Heart left ventricle (tissue), 16 donors: ENCODE measurements at regions of chr9 and their contacts with region 1.

Region 1: DNA sequence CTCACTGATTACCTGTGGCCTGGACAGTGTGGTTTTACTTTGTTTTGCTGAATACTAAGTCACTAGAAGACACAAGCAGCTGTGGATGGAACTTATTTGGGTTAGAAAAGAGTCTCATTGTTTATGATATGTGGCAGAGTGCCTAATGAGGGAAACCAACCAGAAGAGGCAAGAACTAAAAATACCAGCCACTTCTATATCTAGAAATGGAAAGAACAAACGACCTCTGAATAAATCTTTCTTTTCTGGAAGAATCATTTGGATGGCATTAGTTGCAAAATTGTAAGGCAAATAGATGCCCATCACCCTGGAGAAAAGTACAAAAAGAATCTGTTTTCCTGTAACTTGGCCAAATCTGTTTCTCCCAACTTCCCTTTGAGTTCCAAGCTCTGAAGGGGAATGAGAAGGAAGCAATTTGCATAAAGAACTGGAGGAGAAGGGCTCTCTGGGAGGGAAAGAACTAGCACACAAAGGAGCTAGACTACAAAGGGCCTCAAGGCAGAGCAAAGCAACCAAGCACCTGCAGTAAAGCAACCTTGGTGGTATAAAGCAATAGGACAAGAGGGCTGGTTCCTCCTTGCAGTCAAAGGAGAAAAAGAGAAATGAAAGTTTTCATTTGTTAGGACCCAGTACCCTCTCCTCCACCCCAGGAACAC is 455.4 kb downstream of the CAAP1 start:
- DNase-seq: no peak
- ATAC-seq: no peak
- H3K4me3 ChIP-seq: no peak overlapping the region
- H3K27ac ChIP-seq: no peak overlapping the region
- H3K4me1 ChIP-seq: no peaks in the 10 kb centered on the region
- H3K27me3 ChIP-seq: no peaks in the 10 kb centered on the region
- CTCF ChIP-seq: no peak
- POLR2A ChIP-seq: no peak

Region 2: DNA sequence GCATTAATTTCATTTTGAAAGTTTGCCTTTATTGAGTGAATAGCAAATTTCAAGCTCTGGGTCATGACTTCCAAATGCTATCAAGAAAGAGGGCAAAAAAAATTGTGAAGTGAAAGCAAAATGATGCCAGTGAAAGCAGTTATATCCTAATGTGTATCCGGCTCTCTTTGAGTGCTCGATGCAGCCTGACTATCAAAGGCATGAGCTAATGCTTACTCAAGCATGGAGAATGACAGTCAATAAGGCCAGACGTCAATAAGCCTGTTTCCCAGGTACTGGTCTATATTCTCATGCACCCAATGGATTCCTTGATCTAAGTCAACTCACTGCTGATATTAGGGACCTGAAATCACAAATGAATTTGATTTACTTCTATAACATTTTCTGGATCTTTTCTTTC is 20.0 kb after region 1 on chr9:
- intact Hi-C with region 1: loop called in 1 of 10 experiments (anchors 1 kb)
- DNase-seq: no peak
- ATAC-seq: no peak
- H3K4me3 ChIP-seq: no peak overlapping the region
- H3K27ac ChIP-seq: no peak overlapping the region
- H3K4me1 ChIP-seq: no peaks in the 10 kb centered on the region
- H3K27me3 ChIP-seq: no peaks in the 10 kb centered on the region
- CTCF ChIP-seq: no peak
- POLR2A ChIP-seq: no peak

Region 3: DNA sequence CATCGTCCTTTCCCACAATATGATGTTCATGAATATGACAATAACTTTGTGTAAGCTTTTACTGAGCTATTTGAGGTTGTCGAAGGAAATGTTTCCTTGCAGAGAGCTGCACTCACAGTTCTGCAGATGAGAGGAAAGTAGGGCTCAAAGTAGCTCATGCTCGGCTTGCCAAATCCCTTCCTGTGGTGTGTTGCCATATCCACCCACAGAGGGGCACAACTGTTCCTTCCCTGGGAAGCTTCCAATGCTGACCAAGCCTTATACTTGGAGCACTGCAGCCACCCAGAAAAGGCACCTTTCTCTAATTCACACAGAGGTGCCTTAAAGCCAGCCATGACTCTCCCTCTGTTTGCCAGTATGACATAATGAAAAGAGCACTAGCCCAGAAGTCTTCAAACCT is 65.1 kb after region 1 on chr9:
- intact Hi-C with region 1: loop called in 1 of 10 experiments (anchors 10 kb)
- DNase-seq: no peak
- ATAC-seq: no peak
- H3K4me3 ChIP-seq: no peak overlapping the region
- H3K27ac ChIP-seq: no peak overlapping the region
- H3K4me1 ChIP-seq: no peaks in the 10 kb centered on the region
- H3K27me3 ChIP-seq: no peaks in the 10 kb centered on the region
- CTCF ChIP-seq: no peak
- POLR2A ChIP-seq: no peak

Region 4: DNA sequence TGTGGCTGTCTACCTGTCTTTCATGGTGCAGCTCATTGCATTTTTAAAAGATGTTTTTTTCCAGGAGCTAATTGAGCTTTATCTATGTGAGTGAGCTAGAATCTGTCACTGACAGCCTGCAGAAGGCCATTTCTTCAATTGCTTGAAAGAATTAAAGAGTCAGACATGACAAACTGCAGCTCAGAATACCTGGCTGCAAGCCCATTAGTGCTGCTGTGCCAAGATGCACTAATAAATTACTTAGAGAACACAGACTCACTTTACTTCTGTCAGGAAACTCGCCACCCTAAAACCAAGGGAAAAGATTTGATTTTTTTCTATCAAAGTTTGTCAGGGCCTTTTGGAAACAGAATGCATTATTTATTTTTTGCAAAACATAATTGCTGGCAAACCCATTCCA is 87.1 kb after region 1 on chr9:
- intact Hi-C with region 1: no loop called
- DNase-seq: peak in 1 of 5 donors; percentile 13
- ATAC-seq: peak in 1 of 4 donors; percentile 29
- H3K4me3 ChIP-seq: no peak overlapping the region
- H3K27ac ChIP-seq: no peak overlapping the region
- H3K4me1 ChIP-seq: peaks cover 0 to 3% (median 0%) of the 10 kb centered on the region in 12 donors
- H3K27me3 ChIP-seq: no peaks in the 10 kb centered on the region
- CTCF ChIP-seq: no peak
- POLR2A ChIP-seq: no peak

Region 5: DNA sequence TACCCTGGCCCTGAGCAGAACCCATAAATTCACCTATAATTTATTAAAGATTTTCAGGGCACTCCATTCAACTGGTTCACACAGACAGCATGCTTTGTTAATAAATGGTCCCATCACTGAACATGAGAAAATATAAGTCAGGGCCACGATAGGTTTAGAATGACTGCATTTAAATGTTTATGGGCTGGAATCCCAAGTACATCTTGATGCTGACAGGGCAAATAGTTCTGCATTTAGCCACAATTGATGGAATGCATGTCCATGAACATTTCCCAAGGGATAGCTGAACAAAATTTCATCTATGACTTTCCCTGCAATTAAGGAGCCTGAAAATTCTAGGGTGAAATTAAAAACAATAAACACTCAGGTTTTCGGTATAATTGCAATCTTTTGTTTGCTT is 331.0 kb after region 1 on chr9:
- intact Hi-C with region 1: no loop called
- DNase-seq: no peak
- ATAC-seq: no peak
- H3K4me3 ChIP-seq: no peak overlapping the region
- H3K27ac ChIP-seq: no peak overlapping the region
- H3K4me1 ChIP-seq: no peaks in the 10 kb centered on the region
- H3K27me3 ChIP-seq: peaks cover 0 to 6% (median 0%) of the 10 kb centered on the region in 9 donors
- CTCF ChIP-seq: no peak
- POLR2A ChIP-seq: no peak